ENCODE measurements at regions of chr16 and their contacts with region 1.

Region 1: DNA sequence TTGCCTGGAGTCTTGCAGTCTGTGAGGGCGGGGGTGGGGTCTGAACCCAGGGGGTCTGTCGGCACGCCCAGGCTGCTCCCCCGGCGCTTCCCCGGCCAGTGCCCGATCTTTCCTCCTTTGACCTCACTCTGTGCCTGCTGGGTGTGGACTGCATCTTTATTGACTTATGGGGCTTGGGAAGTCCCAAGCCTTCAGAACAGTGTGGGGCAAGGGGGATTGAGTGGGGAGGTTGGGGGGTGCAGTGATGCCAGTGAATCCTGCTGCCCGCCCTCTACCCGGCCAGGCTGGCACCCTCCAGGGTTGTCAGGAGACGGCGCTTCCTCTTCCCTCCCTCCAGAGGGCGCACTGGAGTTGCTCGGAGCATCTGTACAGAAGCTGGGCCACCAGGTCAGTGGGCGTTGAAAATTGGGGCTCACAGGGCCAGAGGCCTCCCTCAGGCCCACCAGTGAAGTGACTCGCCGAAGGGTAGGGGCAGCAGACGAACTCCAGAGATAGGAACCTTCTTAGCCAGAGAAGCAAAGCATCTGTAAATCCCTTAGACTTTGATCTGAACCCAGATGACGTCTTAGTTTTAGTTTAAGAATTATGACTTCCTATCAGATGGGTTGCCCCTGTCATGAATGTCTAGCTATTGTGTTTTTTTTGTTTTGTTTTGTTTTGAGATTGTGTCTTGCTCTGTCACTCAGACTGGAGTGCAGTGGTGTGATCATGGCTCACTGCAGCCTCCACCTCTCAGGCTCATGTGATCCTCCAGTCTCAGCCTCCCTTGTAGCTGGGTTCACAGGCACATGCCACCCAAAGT is 184.8 kb upstream of the CIBAR2 start:
- DNase-seq: peak in 1 of 2 donors; percentile 78
- ATAC-seq: peak; percentile 52 to 66 (median 59)
- H3K4me3 ChIP-seq: no peak overlapping the region
- H3K27ac ChIP-seq: no peak overlapping the region
- H3K4me1 ChIP-seq: peaks cover 22% of the 10 kb centered on the region
- H3K27me3 ChIP-seq: no peaks in the 10 kb centered on the region
- CTCF ChIP-seq: peak; percentile 69

Region 2: DNA sequence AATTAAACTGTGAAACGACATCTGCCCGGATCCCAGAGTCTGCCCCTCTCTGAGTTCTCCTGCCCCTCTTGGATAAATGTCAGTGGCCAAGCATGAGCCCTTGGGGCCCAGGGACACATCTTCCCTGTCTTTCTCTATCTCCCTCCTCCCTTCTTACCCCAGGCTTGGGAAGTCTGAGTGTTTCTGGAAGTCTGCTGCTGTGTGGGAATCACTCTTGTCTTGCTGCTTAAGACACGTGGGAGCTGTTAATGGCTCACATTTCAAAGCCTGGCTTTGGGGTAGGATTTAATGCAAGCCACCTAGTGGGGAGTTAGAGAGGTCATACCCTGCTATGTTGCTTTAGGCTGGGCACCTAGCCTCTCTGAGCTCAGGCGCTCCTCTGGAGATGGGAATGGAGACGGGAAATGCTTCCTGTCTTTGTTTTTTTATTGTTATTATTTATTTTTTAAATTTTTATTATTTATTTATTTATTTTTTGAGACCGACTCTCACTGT is 33.7 kb after region 1 on chr16:
- intact Hi-C with region 1: loop called in 1 of 2 experiments (anchors 5 kb)
- DNase-seq: peak in 1 of 2 donors; percentile 45
- ATAC-seq: peak; percentile 77 to 93 (median 84)
- H3K4me3 ChIP-seq: no peak overlapping the region
- H3K27ac ChIP-seq: peak overlapping the region; percentile 27
- H3K4me1 ChIP-seq: peaks cover 27% of the 10 kb centered on the region
- H3K27me3 ChIP-seq: no peaks in the 10 kb centered on the region
- CTCF ChIP-seq: peak; percentile 53

Region 3: GRCh38 chr16:85390511-85391174 is 93.6 kb after region 1 on chr16:
- intact Hi-C with region 1: no loop called
- DNase-seq: peak; percentile 88
- ATAC-seq: peak; percentile 37 to 82 (median 73)
- H3K4me3 ChIP-seq: no peak overlapping the region
- H3K27ac ChIP-seq: no peak overlapping the region
- H3K4me1 ChIP-seq: peaks cover 13% of the 10 kb centered on the region
- H3K27me3 ChIP-seq: no peaks in the 10 kb centered on the region
- CTCF ChIP-seq: no peak